Common myeloid progenitor, CD34-positive (primary cell): ENCODE measurements at regions of chr10 and their contacts with region 1.

Region 1: GRCh38 chr10:97210543-97210961 is 24.8 kb upstream of the SLIT1 start:
- DNase-seq: peak; percentile 57 to 80 (median 75)
- H3K4me3 ChIP-seq: no peak overlapping the region
- H3K27ac ChIP-seq: no peak overlapping the region
- H3K4me1 ChIP-seq: no peaks in the 10 kb centered on the region
- H3K27me3 ChIP-seq: peaks cover 0 to 12% (median 0%) of the 10 kb centered on the region in 5 experiments

Region 2: DNA sequence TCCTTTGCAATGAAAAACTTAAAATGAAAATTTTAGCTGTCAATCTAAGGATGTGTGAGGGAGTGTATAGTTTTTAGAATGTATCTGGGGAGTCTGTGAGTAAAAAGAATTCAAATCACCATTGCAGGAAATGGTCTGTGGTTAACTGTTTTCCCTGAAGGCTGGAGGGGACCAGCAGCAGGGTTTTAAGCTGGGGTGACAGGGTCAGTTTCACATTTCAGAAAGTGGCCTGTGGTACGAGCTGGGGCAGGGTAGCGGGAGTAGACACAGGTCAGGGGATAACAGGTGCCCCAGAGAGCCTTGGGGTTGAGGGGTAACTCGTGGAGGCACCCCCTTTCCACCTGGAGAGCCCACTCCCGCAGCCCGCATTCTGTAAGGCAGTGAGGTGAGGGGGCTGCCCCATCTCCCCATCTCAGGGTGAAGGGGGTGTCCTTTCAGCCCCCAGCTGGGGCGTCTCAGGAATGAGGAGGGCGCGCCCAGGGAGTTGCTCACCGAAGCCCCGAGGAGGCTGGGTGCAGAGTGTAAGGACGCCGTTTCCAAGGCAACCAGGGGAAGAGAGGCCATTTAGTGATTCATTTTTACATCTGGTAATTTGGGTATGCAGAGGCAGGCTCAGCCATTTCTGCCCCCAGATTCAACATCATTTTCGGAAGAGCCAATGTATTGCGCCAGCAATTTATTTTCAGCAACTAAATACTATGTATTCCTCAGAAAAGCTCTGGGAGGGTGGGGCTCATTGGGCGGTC is 193.7 kb before region 1 on chr10:
- CTCF ChIA-PET with region 1: no interaction called
- POLR2A ChIA-PET with region 1: no interaction called
- DNase-seq: peak in 2 of 3 donors; percentile 70 to 75
- H3K4me3 ChIP-seq: peak overlapping the region in 3 of 7 experiments; percentile 19 to 55 (median 51)
- H3K27ac ChIP-seq: no peak overlapping the region
- H3K4me1 ChIP-seq: peaks cover 0 to 15% (median 12%) of the 10 kb centered on the region in 4 experiments
- H3K27me3 ChIP-seq: no peaks in the 10 kb centered on the region

Region 3: DNA sequence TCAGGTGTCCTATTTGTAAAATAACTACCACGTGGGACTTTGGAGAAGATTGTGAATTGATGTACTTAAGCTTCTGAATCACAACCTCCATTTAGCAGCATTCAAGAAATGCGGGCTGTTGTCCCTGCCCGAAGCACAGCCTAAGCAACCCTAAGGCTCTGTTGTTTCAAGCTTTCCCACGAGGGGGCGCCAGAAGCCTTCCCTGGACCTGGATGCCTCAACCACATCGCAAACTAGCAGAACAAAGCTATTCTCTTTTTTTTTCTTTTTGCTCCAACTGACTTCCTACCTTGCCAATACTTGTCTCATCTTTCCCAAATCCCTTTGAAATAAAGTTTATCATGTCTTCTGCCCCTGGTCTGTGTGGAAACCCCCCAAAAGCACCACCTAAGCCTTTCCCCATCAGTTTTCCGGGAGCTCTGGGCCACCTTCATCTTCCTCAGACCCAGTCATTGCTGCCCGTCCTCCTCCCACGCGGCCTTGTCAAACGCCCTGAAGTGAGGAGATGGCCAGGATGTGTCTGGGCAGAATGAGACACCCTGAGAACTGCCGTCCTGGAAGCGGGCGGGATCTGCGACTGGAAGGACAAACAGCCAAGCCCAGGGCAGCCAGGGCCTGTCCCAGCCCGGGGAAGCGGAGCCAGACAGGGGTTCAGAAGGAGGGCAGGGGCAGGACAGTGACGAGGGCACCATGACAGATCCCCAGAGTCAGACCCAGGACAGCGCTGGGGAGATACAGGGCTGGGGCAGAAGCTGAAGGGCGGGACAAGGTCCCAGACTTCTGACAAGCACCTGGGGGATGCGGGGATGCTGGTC is 137.5 kb before region 1 on chr10:
- CTCF ChIA-PET with region 1: interaction called, 180 read pairs
- POLR2A ChIA-PET with region 1: interaction called, 5 read pairs
- DNase-seq: peak; percentile 73 to 88 (median 82)
- H3K4me3 ChIP-seq: no peak overlapping the region
- H3K27ac ChIP-seq: no peak overlapping the region
- H3K4me1 ChIP-seq: peaks cover 0 to 6% (median 1%) of the 10 kb centered on the region in 4 experiments
- H3K27me3 ChIP-seq: peaks cover 0 to 52% (median 14%) of the 10 kb centered on the region in 5 experiments

Region 4: GRCh38 chr10:97081621-97082235 is 128.8 kb before region 1 on chr10:
- CTCF ChIA-PET with region 1: interaction called, 180 read pairs
- POLR2A ChIA-PET with region 1: interaction called, 5 read pairs
- DNase-seq: peak; percentile 54 to 81 (median 74)
- H3K4me3 ChIP-seq: no peak overlapping the region
- H3K27ac ChIP-seq: no peak overlapping the region
- H3K4me1 ChIP-seq: no peaks in the 10 kb centered on the region
- H3K27me3 ChIP-seq: peaks cover 0 to 50% (median 15%) of the 10 kb centered on the region in 5 experiments

Region 5: GRCh38 chr10:97109547-97109946 is 101.0 kb before region 1 on chr10:
- CTCF ChIA-PET with region 1: interaction called, 10 read pairs
- POLR2A ChIA-PET with region 1: no interaction called
- DNase-seq: no peak
- H3K4me3 ChIP-seq: no peak overlapping the region
- H3K27ac ChIP-seq: no peak overlapping the region
- H3K4me1 ChIP-seq: no peaks in the 10 kb centered on the region
- H3K27me3 ChIP-seq: peaks cover 0 to 42% (median 4%) of the 10 kb centered on the region in 5 experiments

Region 6: GRCh38 chr10:97196223-97197029 is 14.1 kb before region 1 on chr10:
- CTCF ChIA-PET with region 1: interaction called, 132 read pairs
- POLR2A ChIA-PET with region 1: no interaction called
- DNase-seq: peak; percentile 63 to 84 (median 83)
- H3K4me3 ChIP-seq: peak overlapping the region in 6 of 7 experiments; percentile 46 to 78 (median 58)
- H3K27ac ChIP-seq: no peak overlapping the region
- H3K4me1 ChIP-seq: peaks cover 0 to 24% (median 15%) of the 10 kb centered on the region in 4 experiments
- H3K27me3 ChIP-seq: peaks cover 0 to 69% (median 26%) of the 10 kb centered on the region in 5 experiments

Region 7: DNA sequence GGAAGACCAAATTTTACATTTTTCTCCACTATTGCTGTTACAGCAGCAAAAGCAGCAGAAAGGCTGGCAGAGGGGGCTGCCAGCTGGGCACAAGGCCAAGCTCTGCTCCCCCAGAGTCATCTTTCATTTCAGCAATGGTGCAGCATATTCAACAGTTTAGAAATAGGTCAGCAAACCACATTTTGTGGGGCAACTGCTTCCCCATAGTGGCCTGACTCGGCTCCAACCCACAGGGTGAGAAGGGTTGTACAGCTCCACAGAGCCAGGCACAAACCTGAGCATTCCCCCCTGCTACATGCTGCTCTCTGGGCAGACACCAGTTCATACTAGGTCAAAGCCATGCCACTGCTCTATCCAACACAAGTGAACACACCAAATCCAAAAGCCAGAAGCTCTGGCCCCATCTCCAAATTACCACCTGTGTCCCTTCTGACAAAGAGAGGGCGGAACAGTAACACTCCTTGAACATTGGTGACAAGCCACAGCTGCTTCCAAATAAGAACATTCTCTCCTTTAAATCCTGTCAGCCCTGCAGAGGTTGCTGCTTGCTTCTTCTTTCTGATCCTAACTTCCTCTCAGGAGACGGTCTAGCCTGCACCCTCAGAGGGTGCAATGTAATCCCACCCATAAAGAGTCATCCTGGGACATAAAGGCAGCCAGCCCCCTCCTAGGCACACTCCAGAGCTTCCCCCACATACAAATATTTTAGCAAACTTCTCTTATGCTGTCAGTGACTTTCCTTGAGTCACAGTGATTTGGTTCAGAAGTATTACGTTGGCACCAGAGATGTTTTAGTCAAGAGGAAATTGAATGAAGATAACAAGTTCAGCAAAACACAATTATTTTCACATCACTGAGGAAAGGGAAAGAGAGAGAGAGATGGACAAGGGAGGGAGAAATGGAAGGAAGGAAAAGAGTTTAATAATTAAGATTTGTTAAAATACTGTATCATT is 14.2 kb after region 1 on chr10:
- CTCF ChIA-PET with region 1: interaction called, 33 read pairs
- POLR2A ChIA-PET with region 1: no interaction called
- DNase-seq: no peak
- H3K4me3 ChIP-seq: no peak overlapping the region
- H3K27ac ChIP-seq: no peak overlapping the region
- H3K4me1 ChIP-seq: peaks cover 0 to 10% (median 1%) of the 10 kb centered on the region in 4 experiments
- H3K27me3 ChIP-seq: no peaks in the 10 kb centered on the region

Region 8: DNA sequence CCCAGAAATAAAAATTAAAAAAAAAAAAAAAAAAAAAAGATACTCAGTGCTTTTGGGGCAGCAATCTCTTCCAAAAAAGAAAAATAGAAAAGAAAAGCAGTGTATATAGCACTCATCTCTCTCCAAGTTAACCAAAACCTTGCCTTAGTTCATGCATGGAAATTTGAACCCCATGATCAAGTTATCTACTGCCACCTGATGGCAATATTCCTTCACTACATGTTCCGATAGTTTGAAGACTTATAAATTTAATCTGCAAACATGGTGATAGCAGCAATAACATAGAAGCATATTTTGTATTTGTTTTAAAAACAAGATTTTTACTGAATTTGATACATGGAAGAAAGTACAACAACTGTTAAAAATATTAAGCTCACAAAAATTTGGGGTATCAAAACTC is 23.8 kb after region 1 on chr10:
- CTCF ChIA-PET with region 1: interaction called, 13 read pairs
- POLR2A ChIA-PET with region 1: no interaction called
- DNase-seq: peak; percentile 51 to 73 (median 69)
- H3K4me3 ChIP-seq: no peak overlapping the region
- H3K27ac ChIP-seq: no peak overlapping the region
- H3K4me1 ChIP-seq: no peaks in the 10 kb centered on the region
- H3K27me3 ChIP-seq: no peaks in the 10 kb centered on the region

Region 9: DNA sequence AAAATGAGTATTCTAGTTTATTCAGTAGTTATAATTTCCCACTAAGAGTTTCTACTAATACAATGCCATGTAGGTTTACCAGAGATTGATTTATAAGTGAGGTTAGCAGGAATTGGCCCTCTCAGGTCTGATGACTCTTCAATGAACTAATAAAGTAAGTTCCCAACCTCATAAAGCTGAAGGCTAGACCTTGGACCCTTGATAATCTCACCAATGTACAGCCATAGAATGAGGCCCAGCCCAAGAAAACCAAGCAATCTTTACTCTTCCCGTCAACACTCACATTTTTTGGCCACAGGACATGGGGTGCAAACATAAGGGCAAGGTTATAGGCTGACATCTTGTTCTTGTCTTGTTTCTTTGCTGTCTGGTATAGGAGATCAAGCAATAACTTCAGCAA is 48.6 kb after region 1 on chr10:
- CTCF ChIA-PET with region 1: no interaction called
- POLR2A ChIA-PET with region 1: no interaction called
- DNase-seq: no peak
- H3K4me3 ChIP-seq: no peak overlapping the region
- H3K27ac ChIP-seq: no peak overlapping the region
- H3K4me1 ChIP-seq: no peaks in the 10 kb centered on the region
- H3K27me3 ChIP-seq: no peaks in the 10 kb centered on the region